HCT116 (cell line): ENCODE measurements at regions of chr17 and their contacts with region 1.

Region 1: DNA sequence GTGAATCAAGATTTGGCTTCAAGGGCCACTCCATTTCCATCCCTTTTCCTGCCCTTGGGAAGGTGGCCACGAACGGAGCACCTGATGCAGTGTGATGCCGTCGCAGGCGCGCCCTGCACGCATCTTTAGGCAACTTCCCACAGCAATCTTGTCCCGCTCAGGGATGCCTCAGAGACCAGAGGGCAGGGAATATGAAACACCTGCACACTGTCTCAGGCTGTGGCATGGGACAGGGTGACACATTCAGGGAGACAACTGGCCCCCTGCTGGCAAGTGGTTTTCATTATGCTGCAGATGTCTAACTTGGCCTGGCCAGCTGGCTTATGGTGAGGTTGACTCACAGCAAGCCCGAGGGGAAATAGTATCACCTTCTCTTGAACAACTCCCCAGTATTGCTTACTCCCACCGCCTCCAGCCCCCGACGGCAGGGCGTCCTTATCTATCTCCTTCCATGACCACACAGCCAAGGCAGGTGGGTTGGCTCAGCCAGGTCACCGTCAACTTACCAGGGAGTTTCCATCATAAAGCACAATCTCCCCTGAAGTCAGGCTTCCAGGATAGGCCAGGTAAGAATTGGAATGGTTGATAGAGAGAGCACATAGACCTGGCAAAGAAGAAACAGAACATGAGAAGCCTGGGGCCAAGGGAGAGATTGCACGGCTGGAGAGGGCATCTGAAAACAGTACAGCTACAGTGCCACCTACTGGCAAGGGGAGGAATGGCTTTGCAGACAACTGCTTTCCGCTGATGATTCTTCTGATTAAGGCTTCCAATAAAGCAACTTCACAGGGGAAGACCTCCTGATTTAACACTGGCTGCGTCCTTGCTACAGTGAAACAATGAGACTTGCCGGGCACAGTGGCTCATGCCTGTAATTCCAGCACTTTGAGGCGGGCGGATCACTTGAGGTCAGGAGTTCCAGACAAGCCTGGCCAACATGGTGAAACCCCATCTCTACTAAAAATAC is 21.1 kb downstream of the WIPI1 start:
- DNase-seq: peak; percentile 66
- ATAC-seq: peak; percentile 92
- H3K4me3 ChIP-seq: no peak overlapping the region
- H3K27ac ChIP-seq: peak overlapping the region; percentile 18; the same call in 1 of the 2 replicates
- H3K4me1 ChIP-seq: peaks cover 17 to 20% of the 10 kb centered on the region in 2 experiments
- H3K27me3 ChIP-seq: no peaks in the 10 kb centered on the region
- CTCF ChIP-seq: peak in 2 of 3 experiments; percentile 98 to 99
- POLR2A ChIP-seq: no peak
- RAD21 ChIP-seq: peak; percentile 94

Region 2: DNA sequence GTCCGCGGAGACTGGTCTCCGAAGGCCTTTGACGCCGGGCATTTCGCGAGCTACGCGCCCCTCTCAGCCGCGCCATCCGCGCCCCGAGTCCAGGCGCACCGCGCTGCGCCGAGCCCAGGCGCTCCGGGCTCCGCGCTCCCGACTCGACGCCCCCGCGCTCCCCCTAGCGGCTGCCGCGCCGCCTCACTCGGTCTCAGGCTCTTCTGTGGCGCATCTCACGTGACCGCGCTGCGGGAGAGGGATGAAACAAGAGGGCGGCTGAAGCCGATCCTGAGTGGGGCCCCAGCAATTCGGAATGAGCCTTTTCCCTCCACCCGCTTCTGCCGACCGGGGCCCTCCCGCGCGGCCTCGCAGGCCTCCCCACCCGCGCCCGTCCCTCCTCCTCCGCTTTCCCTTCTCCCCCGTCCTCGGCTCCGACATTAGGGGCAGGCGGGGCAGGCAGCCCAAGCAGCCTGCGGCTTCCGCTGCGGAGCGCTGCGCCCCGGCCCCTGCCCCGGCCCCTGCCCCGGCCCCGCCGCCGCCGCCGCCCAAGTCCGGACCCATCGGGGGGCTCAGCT is 230.8 kb before region 1 on chr17:
- CTCF ChIA-PET with region 1: interaction called, 10 read pairs
- POLR2A ChIA-PET with region 1: no interaction called
- RAD21 ChIA-PET with region 1: interaction called in 1 of 2 experiments, 3 read pairs
- intact Hi-C with region 1: no loop called
- DNase-seq: peak; percentile 78
- ATAC-seq: peak; percentile 88
- H3K4me3 ChIP-seq: peak overlapping the region; percentile 80 to 82
- H3K27ac ChIP-seq: peak overlapping the region; percentile 75
- H3K4me1 ChIP-seq: peaks cover 9 to 34% of the 10 kb centered on the region in 2 experiments; a peak in 3 of 4 replicates
- H3K27me3 ChIP-seq: no peaks in the 10 kb centered on the region
- CTCF ChIP-seq: peak; percentile 63 to 91 (median 86)
- POLR2A ChIP-seq: peak; percentile 45
- RAD21 ChIP-seq: peak; percentile 59

Region 3: GRCh38 chr17:68260051-68260762 is 176.0 kb before region 1 on chr17:
- CTCF ChIA-PET with region 1: interaction called, 79 read pairs
- POLR2A ChIA-PET with region 1: no interaction called
- RAD21 ChIA-PET with region 1: interaction called, 5 to 6 read pairs
- intact Hi-C with region 1: loop called (anchors 1 kb)
- DNase-seq: no peak
- ATAC-seq: no peak
- H3K4me3 ChIP-seq: peak overlapping the region in 1 of 2 experiments; percentile 38; a peak in 1 of 4 replicates
- H3K27ac ChIP-seq: no peak overlapping the region
- H3K4me1 ChIP-seq: peaks cover 5 to 35% of the 10 kb centered on the region in 2 experiments; a peak in 3 of 4 replicates
- H3K27me3 ChIP-seq: no peaks in the 10 kb centered on the region
- CTCF ChIP-seq: no peak
- POLR2A ChIP-seq: no peak
- RAD21 ChIP-seq: no peak

Region 4: DNA sequence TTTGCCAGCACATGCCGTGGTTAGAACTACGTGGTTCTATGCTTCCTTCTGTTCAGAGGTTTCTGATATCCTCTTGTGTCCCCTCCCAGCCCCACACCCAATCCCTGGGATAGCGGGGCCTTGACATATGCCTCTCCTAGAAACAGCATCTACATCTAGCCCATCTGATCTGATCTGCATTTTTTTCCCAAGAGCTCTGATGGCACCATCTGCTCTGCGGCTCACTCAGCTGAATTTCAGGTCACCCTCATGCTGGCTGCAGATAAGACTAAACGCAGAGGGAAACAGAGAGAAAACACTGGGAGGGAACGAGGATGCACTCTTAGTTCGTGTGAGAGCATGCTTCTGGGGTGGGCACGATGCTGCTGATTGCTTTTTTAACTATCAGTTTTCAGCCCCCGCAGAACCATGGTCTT is 10.5 kb after region 1 on chr17:
- CTCF ChIA-PET with region 1: interaction called, 12 read pairs
- POLR2A ChIA-PET with region 1: no interaction called
- RAD21 ChIA-PET with region 1: no interaction called
- intact Hi-C with region 1: no loop called
- DNase-seq: no peak
- ATAC-seq: no peak
- H3K4me3 ChIP-seq: no peak overlapping the region
- H3K27ac ChIP-seq: no peak overlapping the region
- H3K4me1 ChIP-seq: no peaks in the 10 kb centered on the region
- H3K27me3 ChIP-seq: no peaks in the 10 kb centered on the region
- CTCF ChIP-seq: no peak
- POLR2A ChIP-seq: no peak
- RAD21 ChIP-seq: no peak

Region 5: GRCh38 chr17:68613739-68614298 is 177.7 kb after region 1 on chr17:
- CTCF ChIA-PET with region 1: no interaction called
- POLR2A ChIA-PET with region 1: no interaction called
- RAD21 ChIA-PET with region 1: no interaction called
- intact Hi-C with region 1: no loop called
- DNase-seq: peak; percentile 62
- ATAC-seq: peak; percentile 96
- H3K4me3 ChIP-seq: no peak overlapping the region
- H3K27ac ChIP-seq: no peak overlapping the region
- H3K4me1 ChIP-seq: no peaks in the 10 kb centered on the region
- H3K27me3 ChIP-seq: no peaks in the 10 kb centered on the region
- CTCF ChIP-seq: peak; percentile 48 to 89 (median 88); a peak in 5 of 6 replicates
- POLR2A ChIP-seq: no peak
- RAD21 ChIP-seq: peak; percentile 71

Region 6: DNA sequence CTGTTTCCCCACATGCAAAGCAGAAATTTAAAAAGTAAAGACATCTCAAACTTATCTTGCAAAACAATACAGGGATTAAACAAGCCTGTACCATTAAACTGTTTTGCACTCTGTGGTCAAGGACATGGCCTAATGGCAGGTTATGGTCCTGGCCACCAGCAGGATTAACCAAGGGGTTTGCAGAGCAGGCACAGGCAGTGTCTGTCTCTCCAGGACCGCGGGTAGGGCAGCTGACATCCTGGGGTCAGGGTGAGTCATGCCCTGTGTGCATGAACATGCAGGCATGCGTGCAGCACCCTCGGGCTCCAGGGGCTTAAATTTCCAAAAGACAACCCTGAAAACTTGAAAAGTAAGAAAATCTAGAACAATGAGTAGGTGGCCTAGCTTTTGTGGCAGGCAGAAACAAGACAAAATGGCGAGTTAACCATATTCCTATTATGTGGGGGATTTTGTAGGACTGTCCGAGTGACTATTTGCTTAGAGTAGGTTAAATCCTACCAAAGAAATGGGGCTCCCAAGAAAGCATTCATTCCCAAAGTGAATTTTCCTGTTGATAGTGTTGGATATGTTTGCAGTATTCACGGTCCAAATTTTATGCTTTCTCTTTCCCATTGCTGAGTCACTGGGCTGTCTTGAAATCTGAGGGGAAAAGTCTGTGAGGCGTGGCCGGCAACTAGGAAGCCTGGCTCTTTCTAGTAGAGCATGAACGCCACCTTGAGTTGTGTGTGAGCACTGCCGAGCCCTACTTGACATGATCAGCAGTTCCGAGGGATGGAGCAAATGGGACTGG is 323.4 kb after region 1 on chr17:
- CTCF ChIA-PET with region 1: no interaction called
- POLR2A ChIA-PET with region 1: no interaction called
- RAD21 ChIA-PET with region 1: no interaction called
- intact Hi-C with region 1: loop called (anchors 1 kb)
- DNase-seq: peak; percentile 91
- ATAC-seq: peak; percentile 95
- H3K4me3 ChIP-seq: peak overlapping the region; percentile 42 to 53
- H3K27ac ChIP-seq: peak overlapping the region; percentile 64
- H3K4me1 ChIP-seq: peaks cover 8 to 15% of the 10 kb centered on the region in 2 experiments; a peak in 3 of 4 replicates
- H3K27me3 ChIP-seq: no peaks in the 10 kb centered on the region
- CTCF ChIP-seq: peak; percentile 94 to 99 (median 99)
- POLR2A ChIP-seq: no peak
- RAD21 ChIP-seq: peak; percentile 98

Region 7: GRCh38 chr17:68782789-68783188 is 346.6 kb after region 1 on chr17:
- CTCF ChIA-PET with region 1: no interaction called
- POLR2A ChIA-PET with region 1: no interaction called
- RAD21 ChIA-PET with region 1: no interaction called
- intact Hi-C with region 1: no loop called
- DNase-seq: no peak
- ATAC-seq: no peak
- H3K4me3 ChIP-seq: no peak overlapping the region
- H3K27ac ChIP-seq: no peak overlapping the region
- H3K4me1 ChIP-seq: no peaks in the 10 kb centered on the region; a peak in 1 of 4 replicates
- H3K27me3 ChIP-seq: no peaks in the 10 kb centered on the region
- CTCF ChIP-seq: no peak
- POLR2A ChIP-seq: no peak
- RAD21 ChIP-seq: no peak